Heart left ventricle (tissue), 16 donors: ENCODE measurements at regions of chr6 and their contacts with region 1.

Region 1: GRCh38 chr6:74574794-74575193 is 631.1 kb downstream of the COL12A1 start:
- DNase-seq: no peak
- ATAC-seq: peak in 1 of 4 donors; percentile 53
- H3K4me3 ChIP-seq: no peak overlapping the region
- H3K27ac ChIP-seq: no peak overlapping the region
- H3K4me1 ChIP-seq: no peaks in the 10 kb centered on the region
- H3K27me3 ChIP-seq: no peaks in the 10 kb centered on the region
- CTCF ChIP-seq: peak; percentile 26 to 59 (median 47)
- POLR2A ChIP-seq: no peak

Region 2: DNA sequence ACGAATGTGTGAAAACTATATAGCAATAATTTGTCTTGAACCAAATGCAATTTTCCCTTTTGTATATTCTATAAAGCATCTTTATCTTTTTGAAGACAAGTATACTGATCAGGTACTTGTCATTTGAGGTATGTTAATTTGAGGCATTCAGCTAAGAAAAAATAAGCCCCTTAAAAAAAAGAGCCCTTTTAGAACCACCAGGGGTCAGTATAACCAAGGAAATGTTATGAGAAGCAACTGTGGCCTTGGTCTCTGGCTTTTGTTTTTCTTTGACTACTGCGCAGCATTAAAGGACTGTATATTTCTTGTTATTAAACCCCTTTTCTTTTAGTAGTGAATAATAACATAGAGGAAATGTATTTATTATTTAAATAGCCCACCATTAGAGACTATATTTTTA is 835.7 kb before region 1 on chr6:
- intact Hi-C with region 1: loop called in 3 of 10 experiments (anchors 5 to 10 kb)
- DNase-seq: no peak
- ATAC-seq: peak; percentile 44 to 85 (median 64)
- H3K4me3 ChIP-seq: no peak overlapping the region
- H3K27ac ChIP-seq: no peak overlapping the region
- H3K4me1 ChIP-seq: peaks cover 0 to 11% (median 0%) of the 10 kb centered on the region in 12 donors
- H3K27me3 ChIP-seq: no peaks in the 10 kb centered on the region
- CTCF ChIP-seq: peak; percentile 67 to 90 (median 84)
- POLR2A ChIP-seq: no peak

Region 3: GRCh38 chr6:73747289-73747688 is 827.5 kb before region 1 on chr6:
- intact Hi-C with region 1: loop called in 2 of 10 experiments (anchors 10 kb)
- DNase-seq: no peak
- ATAC-seq: no peak
- H3K4me3 ChIP-seq: peak overlapping the region in 2 of 12 donors; percentile 10 to 19
- H3K27ac ChIP-seq: peak overlapping the region in 1 of 12 donors; percentile 43
- H3K4me1 ChIP-seq: peaks cover 0 to 10% (median 0%) of the 10 kb centered on the region in 12 donors
- H3K27me3 ChIP-seq: no peaks in the 10 kb centered on the region
- CTCF ChIP-seq: no peak
- POLR2A ChIP-seq: no peak

Region 4: GRCh38 chr6:74091136-74091793 is 483.5 kb before region 1 on chr6:
- intact Hi-C with region 1: loop called in 5 of 10 experiments (anchors 2 to 10 kb)
- DNase-seq: no peak
- ATAC-seq: peak in 3 of 4 donors; percentile 37 to 39 (median 39)
- H3K4me3 ChIP-seq: no peak overlapping the region
- H3K27ac ChIP-seq: peak overlapping the region in 4 of 12 donors; percentile 5 to 49 (median 8)
- H3K4me1 ChIP-seq: peaks cover 0 to 7% (median 0%) of the 10 kb centered on the region in 12 donors
- H3K27me3 ChIP-seq: no peaks in the 10 kb centered on the region
- CTCF ChIP-seq: peak; percentile 54 to 80 (median 68)
- POLR2A ChIP-seq: no peak

Region 5: DNA sequence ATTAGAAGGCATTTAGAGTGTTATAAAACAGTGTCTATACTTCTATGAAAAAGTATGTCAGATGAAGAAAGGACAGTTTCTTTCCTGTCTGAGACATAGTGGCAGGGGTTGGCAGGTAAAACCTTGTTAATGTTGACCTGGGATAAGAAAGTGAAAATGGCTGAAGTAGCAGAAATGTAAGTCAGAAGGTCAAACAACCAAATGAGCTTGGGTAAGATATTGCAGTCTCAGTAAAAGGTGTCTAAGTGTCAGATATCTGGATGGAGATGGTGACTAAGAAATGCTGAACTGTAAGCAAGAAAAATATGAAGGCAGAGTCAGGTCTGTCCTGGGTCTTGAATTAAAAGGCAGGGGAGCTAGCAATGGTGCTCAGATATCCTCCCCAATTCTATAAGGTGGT is 478.5 kb before region 1 on chr6:
- intact Hi-C with region 1: loop called in 4 of 10 experiments (anchors 2 to 10 kb)
- DNase-seq: no peak
- ATAC-seq: no peak
- H3K4me3 ChIP-seq: no peak overlapping the region
- H3K27ac ChIP-seq: no peak overlapping the region
- H3K4me1 ChIP-seq: no peaks in the 10 kb centered on the region
- H3K27me3 ChIP-seq: no peaks in the 10 kb centered on the region
- CTCF ChIP-seq: no peak
- POLR2A ChIP-seq: no peak